Activated CD4-positive, alpha-beta memory T cell treated with anti-CD3 and anti-CD28 coated beads for 36 hours (primary cell): ENCODE measurements at regions of chr12 and their contacts with region 1.

Region 1: GRCh38 chr12:10540776-10541205 is 35.1 kb downstream of the EIF2S3B start:
- DNase-seq: no peak
- H3K4me3 Mint-ChIP-seq: no peak overlapping the region
- H3K27ac Mint-ChIP-seq: no peak overlapping the region
- H3K4me1 Mint-ChIP-seq: peaks cover 9% of the 10 kb centered on the region
- H3K27me3 Mint-ChIP-seq: peaks cover 39% of the 10 kb centered on the region

Region 2: DNA sequence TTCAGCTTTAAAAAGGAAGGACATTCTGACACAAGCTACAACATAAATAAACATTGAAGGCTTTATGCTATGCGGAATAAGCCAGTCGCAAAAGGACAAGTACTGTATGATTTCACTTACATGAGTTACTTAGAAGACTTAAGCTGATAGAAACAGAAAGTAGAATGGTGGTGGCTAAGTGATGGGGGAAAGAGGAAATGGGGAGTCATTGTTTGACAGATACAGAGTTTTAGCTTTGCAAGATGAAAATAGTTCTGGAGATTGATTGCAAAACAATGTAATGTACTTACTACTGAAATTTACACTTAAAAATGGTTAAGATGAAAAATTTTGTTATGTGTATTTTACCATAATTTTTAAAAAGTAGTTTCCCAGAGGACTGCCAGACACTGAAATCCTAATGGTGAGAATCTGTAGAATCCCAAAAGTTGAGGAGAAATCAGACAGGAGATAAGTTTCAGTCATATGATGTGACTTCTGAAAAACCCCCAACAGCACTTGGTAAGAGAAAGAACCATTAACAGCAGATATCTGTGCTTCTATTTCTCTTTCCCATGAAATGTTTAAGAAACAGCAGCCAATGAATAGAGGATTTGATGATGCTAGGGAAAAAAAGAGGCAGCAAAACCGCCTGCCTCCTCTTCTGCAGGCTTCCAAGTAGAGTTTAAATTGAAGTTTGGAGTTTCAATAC is 592.0 kb before region 1 on chr12:
- CTCF ChIA-PET with region 1: no interaction called
- POLR2A ChIA-PET with region 1: no interaction called
- intact Hi-C with region 1: no loop called
- DNase-seq: no peak
- H3K4me3 Mint-ChIP-seq: no peak overlapping the region
- H3K27ac Mint-ChIP-seq: no peak overlapping the region
- H3K4me1 Mint-ChIP-seq: peaks cover 42% of the 10 kb centered on the region
- H3K27me3 Mint-ChIP-seq: no peaks in the 10 kb centered on the region

Region 3: DNA sequence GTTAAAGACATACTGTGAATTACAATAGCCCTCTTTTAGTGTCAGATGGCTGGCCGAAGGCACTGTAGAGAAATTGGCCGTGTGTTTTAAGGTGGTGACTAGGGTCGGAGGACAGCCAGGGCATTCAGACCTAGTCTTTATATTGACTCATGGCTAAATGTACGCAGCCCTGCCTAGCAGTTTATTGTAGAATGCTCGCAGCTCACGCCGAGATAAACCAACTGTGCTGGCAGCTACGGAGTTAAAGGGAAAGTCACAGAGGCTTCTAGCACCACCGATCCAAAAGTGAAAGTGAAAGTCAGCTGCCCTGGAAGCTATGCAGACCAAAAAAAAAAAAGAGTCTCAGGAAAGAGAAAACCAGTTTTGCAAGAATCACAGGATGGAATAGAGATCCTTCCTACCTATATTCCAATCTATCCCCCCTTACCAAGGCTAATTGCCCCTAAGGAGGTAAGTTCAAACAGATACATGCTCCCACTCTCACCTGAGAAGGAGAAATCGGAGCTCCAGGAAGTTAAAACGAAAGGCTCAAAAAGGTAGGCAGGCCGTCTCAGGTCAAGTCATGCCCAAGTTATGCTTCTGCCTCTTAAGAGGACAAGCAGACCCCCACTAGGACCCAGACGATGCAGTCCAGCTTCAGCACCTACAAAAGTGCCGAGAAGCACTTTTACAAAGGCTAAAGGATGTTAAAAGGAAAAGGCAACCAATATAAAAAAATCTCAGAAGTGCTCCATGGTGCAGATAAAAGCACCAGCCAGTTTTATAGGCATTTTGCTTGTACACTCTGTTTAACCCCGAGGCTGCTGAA is 175.8 kb before region 1 on chr12:
- CTCF ChIA-PET with region 1: no interaction called
- POLR2A ChIA-PET with region 1: no interaction called
- intact Hi-C with region 1: loop called (anchors 5 kb)
- DNase-seq: peak; percentile 64
- H3K4me3 Mint-ChIP-seq: no peak overlapping the region
- H3K27ac Mint-ChIP-seq: no peak overlapping the region
- H3K4me1 Mint-ChIP-seq: no peaks in the 10 kb centered on the region
- H3K27me3 Mint-ChIP-seq: peaks cover 2% of the 10 kb centered on the region

Region 4: DNA sequence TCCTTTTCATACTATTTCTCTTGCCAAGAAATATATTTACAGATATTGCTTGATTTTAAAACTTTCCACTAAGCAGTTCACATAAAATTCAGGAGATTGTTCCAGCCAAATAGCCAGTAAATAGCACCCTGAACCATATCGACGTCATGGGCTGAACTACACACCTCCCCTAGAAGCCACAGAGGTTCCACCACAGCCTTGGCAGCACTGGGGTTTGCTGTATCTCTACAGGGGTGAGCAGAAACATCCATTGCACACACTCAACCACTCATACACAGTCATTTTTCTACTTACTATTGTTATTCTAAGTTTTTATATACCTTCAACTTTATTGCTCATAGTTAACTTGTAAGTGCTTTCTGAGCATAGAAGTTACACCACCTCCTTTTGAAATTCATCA is 43.2 kb before region 1 on chr12:
- CTCF ChIA-PET with region 1: no interaction called
- POLR2A ChIA-PET with region 1: no interaction called
- intact Hi-C with region 1: loop called (anchors 2 kb)
- DNase-seq: peak; percentile 53
- H3K4me3 Mint-ChIP-seq: no peak overlapping the region
- H3K27ac Mint-ChIP-seq: no peak overlapping the region
- H3K4me1 Mint-ChIP-seq: peaks cover 5% of the 10 kb centered on the region
- H3K27me3 Mint-ChIP-seq: peaks cover 29% of the 10 kb centered on the region

Region 5: GRCh38 chr12:10811883-10812536 is 271.2 kb after region 1 on chr12:
- CTCF ChIA-PET with region 1: no interaction called
- POLR2A ChIA-PET with region 1: no interaction called
- intact Hi-C with region 1: no loop called
- DNase-seq: no peak
- H3K4me3 Mint-ChIP-seq: no peak overlapping the region
- H3K27ac Mint-ChIP-seq: no peak overlapping the region
- H3K4me1 Mint-ChIP-seq: no peaks in the 10 kb centered on the region
- H3K27me3 Mint-ChIP-seq: peaks cover 11% of the 10 kb centered on the region